ENCODE measurements at regions of chr10 and their contacts with region 1.

Region 1: GRCh38 chr10:794466-794865 is 105.0 kb upstream of the DIP2C start:
- DNase-seq: peak in 1 of 5 donors; percentile 19
- ATAC-seq: peak; percentile 29 to 86 (median 64)
- H3K4me3 ChIP-seq: no peak overlapping the region
- H3K27ac ChIP-seq: no peak overlapping the region
- H3K4me1 ChIP-seq: peaks cover 0 to 5% (median 0%) of the 10 kb centered on the region in 12 donors
- H3K27me3 ChIP-seq: no peaks in the 10 kb centered on the region
- CTCF ChIP-seq: peak in 9 of 12 donors; percentile 11 to 59 (median 33)
- POLR2A ChIP-seq: no peak

Region 2: GRCh38 chr10:588241-589165 is 206.0 kb before region 1 on chr10:
- intact Hi-C with region 1: loop called in 6 of 10 experiments (anchors 5 to 10 kb)
- DNase-seq: peak; percentile 52 to 81 (median 70)
- ATAC-seq: peak; percentile 41 to 80 (median 79)
- H3K4me3 ChIP-seq: no peak overlapping the region
- H3K27ac ChIP-seq: no peak overlapping the region
- H3K4me1 ChIP-seq: peaks cover 0 to 39% (median 13%) of the 10 kb centered on the region in 12 donors
- H3K27me3 ChIP-seq: no peaks in the 10 kb centered on the region
- CTCF ChIP-seq: peak in 8 of 12 donors; percentile 18 to 42 (median 34)
- POLR2A ChIP-seq: no peak